ENCODE measurements at regions of chr12 and their contacts with region 1.

Region 1: DNA sequence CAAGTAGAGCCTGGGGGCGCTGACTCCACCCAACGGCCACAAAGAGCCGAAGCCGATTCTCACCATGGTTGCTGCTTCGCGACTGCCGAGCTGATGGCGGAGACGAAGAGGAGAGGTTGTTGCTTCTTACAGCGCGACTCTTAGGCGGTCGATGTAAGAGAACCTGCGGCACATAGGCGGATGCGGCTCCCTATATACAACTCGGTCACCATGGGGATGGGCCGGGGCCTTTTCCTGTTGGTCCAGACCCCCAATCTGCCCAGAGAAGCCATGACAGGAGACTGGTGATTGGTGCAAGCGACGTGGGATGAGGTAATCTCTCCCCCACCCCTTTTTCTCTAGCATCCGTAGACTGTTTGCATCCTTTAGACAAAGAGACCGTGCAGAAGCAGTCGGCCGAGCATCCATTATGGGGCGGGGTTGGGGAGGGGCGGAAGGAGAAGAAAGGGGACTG is at the start of gene TUBA1A:
- DNase-seq: peak; percentile 98
- H3K4me3 Mint-ChIP-seq: peak within 1 kb of the TSS; percentile 93
- H3K27ac Mint-ChIP-seq: peak within 1 kb of the TSS; percentile 99
- H3K4me1 Mint-ChIP-seq: peaks cover 11% of the 10 kb centered on the region
- H3K27me3 Mint-ChIP-seq: peaks cover 9% of the 10 kb centered on the region
- total RNA-seq, gene TUBA1A: 45.9 and 46.8 TPM in 2 replicates

Region 2: GRCh38 chr12:49070971-49071370 is 118.0 kb before region 1 on chr12:
- intact Hi-C with region 1: no loop called
- DNase-seq: no peak
- H3K4me3 Mint-ChIP-seq: no peak overlapping the region
- H3K27ac Mint-ChIP-seq: peak overlapping the region; percentile 3
- H3K4me1 Mint-ChIP-seq: peaks cover 25% of the 10 kb centered on the region
- H3K27me3 Mint-ChIP-seq: no peaks in the 10 kb centered on the region

Region 3: GRCh38 chr12:49201595-49202295 is 12.8 kb after region 1 on chr12:
- intact Hi-C with region 1: loop called (anchors 2 kb)
- DNase-seq: peak; percentile 70
- H3K4me3 Mint-ChIP-seq: no peak overlapping the region
- H3K27ac Mint-ChIP-seq: peak overlapping the region; percentile 37
- H3K4me1 Mint-ChIP-seq: peaks cover 10% of the 10 kb centered on the region
- H3K27me3 Mint-ChIP-seq: peaks cover 9% of the 10 kb centered on the region

Region 4: DNA sequence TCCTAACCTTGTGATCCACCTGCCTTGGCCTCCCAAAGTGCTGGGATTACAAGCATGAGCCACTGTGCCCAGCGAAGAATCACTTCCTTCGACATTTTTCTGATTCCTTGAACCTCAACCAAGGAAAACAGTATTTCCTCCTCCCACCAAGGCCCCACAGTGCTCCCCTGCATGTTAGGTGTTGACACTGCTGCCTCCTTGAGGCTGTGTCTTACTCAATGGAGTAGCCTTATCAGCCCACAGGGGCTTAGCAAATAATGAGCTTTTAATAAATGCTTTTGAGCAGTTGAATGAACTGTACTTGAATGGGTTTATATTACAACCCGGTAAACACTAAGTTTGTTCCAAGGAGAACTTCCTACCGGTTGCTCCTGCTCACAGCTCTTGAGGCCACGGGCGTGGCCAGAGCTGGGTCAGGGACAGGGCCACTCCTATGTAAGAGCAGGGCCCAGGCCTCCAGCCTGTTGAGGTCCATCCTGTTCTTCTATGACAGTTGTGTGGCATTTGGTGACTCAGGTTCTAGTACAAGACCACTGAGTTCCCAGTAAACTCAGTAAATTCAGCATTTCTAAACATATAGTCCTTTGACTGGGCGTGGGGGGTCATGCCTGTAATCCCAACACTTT is 36.7 kb after region 1 on chr12:
- intact Hi-C with region 1: no loop called
- DNase-seq: no peak
- H3K4me3 Mint-ChIP-seq: no peak overlapping the region
- H3K27ac Mint-ChIP-seq: no peak overlapping the region
- H3K4me1 Mint-ChIP-seq: peaks cover 3% of the 10 kb centered on the region
- H3K27me3 Mint-ChIP-seq: peaks cover 10% of the 10 kb centered on the region

Region 5: DNA sequence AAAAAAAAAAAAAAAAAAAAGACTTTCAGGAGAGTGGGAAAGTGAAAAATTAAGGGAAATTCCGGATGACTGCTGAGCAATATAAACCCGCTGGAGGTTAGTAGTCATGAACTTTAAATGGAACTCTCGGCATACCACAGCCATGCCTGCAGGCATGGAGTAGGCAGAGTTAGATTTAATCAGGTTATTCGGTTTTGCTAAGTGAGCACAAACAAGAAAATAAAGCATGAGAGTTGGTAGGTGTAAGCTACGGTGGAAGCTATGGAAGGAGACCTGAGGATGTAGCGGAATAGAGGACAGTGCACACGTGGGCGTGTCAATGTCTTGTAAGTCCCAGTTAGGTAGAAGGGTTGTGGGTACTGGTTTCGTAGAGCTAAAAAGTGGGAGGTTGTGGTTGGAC is 64.1 kb after region 1 on chr12:
- intact Hi-C with region 1: no loop called
- DNase-seq: no peak
- H3K4me3 Mint-ChIP-seq: no peak overlapping the region
- H3K27ac Mint-ChIP-seq: no peak overlapping the region
- H3K4me1 Mint-ChIP-seq: peaks cover 3% of the 10 kb centered on the region
- H3K27me3 Mint-ChIP-seq: no peaks in the 10 kb centered on the region

Measured in activated CD4-positive, alpha-beta T cell treated with anti-CD3 and anti-CD28 coated beads, Interleukin-2, amount 10 ng/mL, durations not matched to agents 24 days and 14 days (primary cell).